PC-9 (cell line): ENCODE measurements at regions of chr3 and their contacts with region 1.

Region 1: GRCh38 chr3:107235928-107236315 is 141.3 kb upstream of the CCDC54 start:
- DNase-seq: peak; percentile 51 to 88
- H3K4me3 ChIP-seq: peak overlapping the region; percentile 22; the same call in 1 of the 2 replicates
- H3K27ac ChIP-seq: peak overlapping the region; percentile 23
- H3K4me1 ChIP-seq: peaks cover 33% of the 10 kb centered on the region
- H3K27me3 ChIP-seq: no peaks in the 10 kb centered on the region
- CTCF ChIP-seq: peak; percentile 99

Region 2: GRCh38 chr3:107206141-107206540 is 29.8 kb before region 1 on chr3:
- CTCF ChIA-PET with region 1: interaction called, 14 read pairs
- POLR2A ChIA-PET with region 1: interaction called, 10 read pairs
- intact Hi-C with region 1: loop called (anchors 1 kb)
- DNase-seq: peak; percentile 26 to 57
- H3K4me3 ChIP-seq: no peak overlapping the region
- H3K27ac ChIP-seq: no peak overlapping the region
- H3K4me1 ChIP-seq: peaks cover 32% of the 10 kb centered on the region
- H3K27me3 ChIP-seq: no peaks in the 10 kb centered on the region
- CTCF ChIP-seq: peak; percentile 90

Region 3: DNA sequence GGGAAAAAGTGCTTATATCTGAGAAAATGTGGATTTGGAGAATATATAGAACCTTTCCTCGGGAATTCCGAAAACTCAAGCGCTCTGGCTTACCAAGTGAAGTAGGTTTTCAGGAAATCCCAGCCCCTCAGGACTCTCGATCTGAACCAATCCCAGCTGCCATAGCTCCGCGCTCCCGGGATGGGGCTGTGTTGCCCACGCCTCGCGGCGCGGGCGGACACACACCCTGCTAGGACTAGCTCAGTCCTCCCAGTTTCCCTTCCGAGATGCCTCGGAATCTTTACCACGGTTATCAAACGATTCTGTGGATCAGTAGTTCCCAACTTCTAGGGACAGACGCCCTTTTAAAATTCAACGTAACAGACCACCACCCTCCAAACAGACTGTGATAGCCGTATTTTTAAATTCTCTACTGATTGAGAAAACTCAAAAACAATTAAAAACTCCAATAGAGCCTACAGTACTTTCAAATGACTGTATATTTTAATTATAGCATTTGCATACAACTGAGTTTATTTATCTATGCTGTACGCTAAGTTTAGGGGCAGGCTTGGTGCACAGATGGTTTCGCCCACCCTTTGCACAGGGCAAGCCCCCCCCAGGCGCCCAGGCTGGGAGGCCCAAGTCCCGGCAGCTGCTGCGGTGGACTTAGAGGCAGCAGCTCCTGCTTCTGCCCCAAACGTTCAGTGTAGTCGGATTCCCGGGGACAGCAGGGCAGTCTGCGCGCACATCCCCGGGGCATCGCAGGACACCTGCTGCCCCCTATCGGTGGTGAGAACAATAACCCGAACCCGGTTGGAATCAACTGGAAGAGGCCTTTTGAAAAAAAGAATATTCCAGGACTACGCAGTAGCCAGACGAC is 193.6 kb after region 1 on chr3:
- CTCF ChIA-PET with region 1: interaction called, 6 read pairs
- POLR2A ChIA-PET with region 1: interaction called, 5 read pairs
- intact Hi-C with region 1: loop called (anchors 1 kb)
- DNase-seq: peak; percentile 64 to 86
- H3K4me3 ChIP-seq: peak overlapping the region; percentile 38; the same call in 1 of the 2 replicates
- H3K27ac ChIP-seq: no peak overlapping the region
- H3K4me1 ChIP-seq: peaks cover 9% of the 10 kb centered on the region
- H3K27me3 ChIP-seq: no peaks in the 10 kb centered on the region
- CTCF ChIP-seq: peak; percentile 94

Region 4: DNA sequence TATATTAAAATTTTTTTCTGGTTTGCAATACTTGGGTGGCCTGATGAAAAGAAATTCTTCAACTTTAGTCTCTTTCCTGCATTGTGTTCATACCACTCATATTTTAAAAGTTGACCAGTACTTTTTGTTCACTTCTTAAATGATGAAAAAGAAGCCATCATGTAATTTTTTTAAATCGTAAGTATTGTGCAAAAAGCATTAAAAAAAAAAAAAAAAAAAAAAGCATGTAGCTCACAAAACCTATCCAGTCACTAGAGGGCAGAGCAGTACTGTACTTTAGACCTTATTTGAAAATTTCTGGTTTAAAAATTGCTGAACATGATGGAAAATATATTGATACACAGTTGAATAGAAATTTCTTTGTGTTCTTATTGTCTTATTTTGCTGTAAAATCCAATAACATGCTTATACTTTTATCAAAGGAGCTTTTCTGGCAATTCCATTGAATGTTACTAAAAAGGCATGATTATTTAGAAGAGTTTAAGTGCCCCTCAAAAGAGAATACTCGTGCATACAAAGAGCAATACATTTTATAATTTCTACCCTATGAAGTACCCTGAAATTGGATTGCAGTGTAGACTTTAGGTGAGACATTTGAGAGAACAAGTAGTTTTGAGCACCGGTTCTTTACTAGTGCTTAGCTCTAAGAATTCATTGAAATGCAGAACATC is 424.5 kb after region 1 on chr3:
- CTCF ChIA-PET with region 1: interaction called, 4 read pairs
- POLR2A ChIA-PET with region 1: no interaction called
- intact Hi-C with region 1: loop called (anchors 5 kb)
- DNase-seq: peak in 1 of 2 experiments; percentile 53
- H3K4me3 ChIP-seq: no peak overlapping the region
- H3K27ac ChIP-seq: no peak overlapping the region
- H3K4me1 ChIP-seq: no peaks in the 10 kb centered on the region
- H3K27me3 ChIP-seq: no peaks in the 10 kb centered on the region
- CTCF ChIP-seq: peak; percentile 92

Region 5: GRCh38 chr3:107846279-107846852 is 610.4 kb after region 1 on chr3:
- CTCF ChIA-PET with region 1: interaction called, 3 read pairs
- POLR2A ChIA-PET with region 1: no interaction called
- intact Hi-C with region 1: loop called (anchors 1 kb)
- DNase-seq: peak in 1 of 2 experiments; percentile 59
- H3K4me3 ChIP-seq: no peak overlapping the region
- H3K27ac ChIP-seq: no peak overlapping the region
- H3K4me1 ChIP-seq: peaks cover 7% of the 10 kb centered on the region; the same call in 1 of the 2 replicates
- H3K27me3 ChIP-seq: no peaks in the 10 kb centered on the region
- CTCF ChIP-seq: peak; percentile 76

Region 6: GRCh38 chr3:108406661-108407206 is 1170.8 kb after region 1 on chr3:
- CTCF ChIA-PET with region 1: no interaction called
- POLR2A ChIA-PET with region 1: no interaction called
- intact Hi-C with region 1: loop called (anchors 1 kb)
- DNase-seq: peak; percentile 37 to 70
- H3K4me3 ChIP-seq: no peak overlapping the region
- H3K27ac ChIP-seq: no peak overlapping the region
- H3K4me1 ChIP-seq: peaks cover 7% of the 10 kb centered on the region
- H3K27me3 ChIP-seq: no peaks in the 10 kb centered on the region
- CTCF ChIP-seq: peak; percentile 93

Region 7: DNA sequence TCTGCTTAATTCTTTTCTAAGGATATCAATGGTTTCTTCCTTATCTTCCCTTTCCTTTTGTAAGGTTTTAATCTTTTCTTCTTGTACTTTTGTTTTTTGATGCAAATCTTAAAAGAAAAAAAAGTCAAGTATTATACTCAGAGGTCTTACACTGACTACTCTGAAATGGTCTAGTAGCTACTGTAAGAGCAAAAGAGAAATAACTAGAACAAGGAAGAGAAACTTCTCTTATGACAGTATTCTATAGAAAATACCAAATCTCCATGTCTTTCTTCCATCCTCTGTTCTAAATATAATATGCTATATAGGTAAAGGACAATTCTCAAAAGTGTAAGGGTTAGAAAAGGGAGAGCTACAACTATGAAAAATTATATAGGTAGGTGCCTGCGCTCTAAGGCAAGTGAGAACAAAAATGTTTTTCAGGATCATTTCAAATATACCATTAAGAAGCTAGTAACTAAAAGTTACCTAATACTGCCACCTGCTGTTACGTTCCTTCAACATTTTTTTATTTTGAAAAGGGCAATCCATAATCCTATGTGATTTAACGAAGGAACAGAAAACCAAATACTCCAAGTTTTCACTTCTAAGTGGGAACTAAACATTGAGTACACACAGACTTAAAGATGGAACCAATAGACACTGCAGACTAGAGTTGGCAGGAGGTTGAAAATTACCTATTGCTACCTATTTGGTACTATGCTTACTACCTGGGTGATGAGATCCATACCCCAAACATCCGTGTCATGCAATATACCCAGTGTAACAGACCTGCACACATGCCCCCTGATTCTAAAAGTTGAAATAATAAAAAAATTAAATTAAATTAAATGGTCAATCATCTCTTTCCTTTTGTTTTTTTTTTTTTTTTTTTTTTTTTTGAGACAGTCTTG is 1316.6 kb after region 1 on chr3:
- CTCF ChIA-PET with region 1: interaction called, 3 read pairs
- POLR2A ChIA-PET with region 1: interaction called, 4 read pairs
- intact Hi-C with region 1: loop called (anchors 1 kb)
- DNase-seq: peak in 1 of 2 experiments; percentile 63
- H3K4me3 ChIP-seq: no peak overlapping the region
- H3K27ac ChIP-seq: no peak overlapping the region
- H3K4me1 ChIP-seq: no peaks in the 10 kb centered on the region
- H3K27me3 ChIP-seq: no peaks in the 10 kb centered on the region
- CTCF ChIP-seq: peak; percentile 90